Activated CD8-positive, alpha-beta T cell treated with anti-CD3 and anti-CD28 coated beads for 36 hours (primary cell): ENCODE measurements at regions of chr11 and their contacts with region 1.

Region 1: DNA sequence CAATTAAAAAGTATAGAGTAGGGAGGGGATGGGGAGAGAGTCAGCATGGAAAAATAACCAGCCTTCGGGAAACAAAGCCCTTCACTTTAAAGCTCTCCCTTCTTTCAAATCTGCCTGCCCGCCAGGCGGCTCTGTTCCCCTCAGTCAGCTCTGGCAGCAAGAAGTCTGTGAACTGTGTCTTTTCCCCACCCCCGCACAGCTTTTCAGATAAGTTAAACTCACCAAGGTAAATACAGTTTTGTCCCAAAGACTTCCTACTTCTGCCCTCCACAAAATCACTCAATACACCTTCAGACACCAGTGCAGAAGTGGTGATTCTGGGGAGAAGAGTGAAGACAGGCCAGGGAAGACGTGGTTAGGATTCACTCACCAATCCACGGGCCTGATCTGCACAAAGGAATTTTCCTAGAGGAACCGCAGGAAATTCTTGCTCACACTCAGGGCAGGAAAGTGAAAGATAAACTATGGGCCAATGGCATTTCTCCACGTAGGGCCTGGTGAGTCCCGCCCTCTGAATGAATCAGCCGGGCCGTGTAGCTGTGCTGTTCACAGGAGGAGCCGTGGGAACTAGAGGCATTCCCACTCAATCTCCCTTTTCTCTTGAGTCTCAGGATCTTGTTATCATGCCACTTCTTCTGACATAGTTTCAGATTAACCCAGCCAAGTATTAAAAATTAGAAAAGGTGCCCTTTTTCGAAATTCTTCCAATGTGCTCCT is at the start of gene TRIM5:
- DNase-seq: peak; percentile 94
- ATAC-seq: peak; percentile 84
- H3K4me3 Mint-ChIP-seq: peak within 1 kb of the TSS; percentile 95
- H3K27ac Mint-ChIP-seq: peak within 1 kb of the TSS; percentile 98
- H3K4me1 Mint-ChIP-seq: peaks cover 49% of the 10 kb centered on the region
- H3K27me3 Mint-ChIP-seq: no peaks in the 10 kb centered on the region
- CTCF ChIP-seq: peak; percentile 75
- total RNA-seq, gene TRIM5: 21.5 TPM

Region 2: DNA sequence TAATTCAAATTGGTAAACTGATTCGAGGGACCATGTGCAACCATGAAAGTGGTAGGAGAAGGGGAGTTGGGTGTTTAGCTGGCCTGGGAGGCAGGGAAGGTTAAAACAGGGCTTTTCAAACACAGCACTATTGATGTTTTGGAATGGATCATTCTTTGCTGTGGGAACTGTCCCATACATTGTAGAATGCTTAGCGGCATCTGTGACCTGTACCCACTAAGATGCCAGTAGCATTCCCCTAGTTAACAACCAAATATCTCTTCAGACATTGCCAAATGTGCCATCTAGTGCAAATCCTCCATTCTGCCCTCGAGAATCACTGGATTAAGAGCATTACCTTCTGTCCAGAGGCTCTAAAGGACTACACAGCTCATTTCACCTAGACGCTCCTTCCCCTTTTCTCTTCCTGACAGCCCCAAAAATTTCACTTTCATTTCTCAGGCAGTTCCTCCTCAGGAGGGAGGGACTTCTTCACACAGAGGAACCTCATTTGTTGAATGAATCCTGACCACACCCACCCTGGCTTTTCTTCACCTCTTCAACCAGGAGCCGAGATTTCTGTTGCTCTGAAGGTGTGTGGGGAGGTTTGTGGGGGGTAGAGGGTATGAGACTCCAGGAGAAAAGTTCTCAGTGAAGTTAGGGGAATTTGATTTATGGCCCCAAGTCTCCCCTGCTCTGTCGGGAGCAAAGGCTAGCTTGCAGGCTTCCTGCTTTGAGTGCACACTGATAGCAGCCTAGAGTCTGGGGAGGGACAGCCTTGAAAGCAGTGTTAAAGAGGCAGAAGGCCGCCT is 60.1 kb before region 1 on chr11 and contains the start of gene TRIM34:
- CTCF ChIA-PET with region 1: interaction called, 5 read pairs
- POLR2A ChIA-PET with region 1: interaction called, 9 read pairs
- intact Hi-C with region 1: loop called (anchors 2 kb)
- DNase-seq: peak; percentile 73
- ATAC-seq: peak; percentile 97
- H3K4me3 Mint-ChIP-seq: peak within 1 kb of the TSS; percentile 93
- H3K27ac Mint-ChIP-seq: peak within 1 kb of the TSS; percentile 95
- H3K4me1 Mint-ChIP-seq: peaks cover 45% of the 10 kb centered on the region
- H3K27me3 Mint-ChIP-seq: no peaks in the 10 kb centered on the region
- CTCF ChIP-seq: no peak
- total RNA-seq, gene TRIM34: 8.5 to 9.3 TPM

Region 3: DNA sequence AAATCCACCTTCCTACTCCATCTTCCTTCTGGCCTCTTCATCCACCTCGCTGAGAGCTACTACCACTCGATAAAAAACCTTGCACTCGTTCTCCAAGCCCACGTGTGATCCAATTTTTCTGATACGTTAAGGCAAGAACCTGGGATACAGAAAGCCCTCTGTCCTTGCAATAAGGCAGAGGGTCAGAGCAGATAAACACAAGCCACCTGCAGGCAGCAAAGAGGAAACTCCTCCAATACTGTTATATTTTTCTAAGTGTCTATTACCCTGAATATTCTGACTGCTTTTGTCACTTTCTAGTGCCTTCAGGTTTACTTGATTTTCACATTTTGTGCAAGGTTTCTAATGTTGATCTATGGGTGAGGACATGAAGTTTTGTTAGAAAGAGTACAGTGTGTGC is 26.5 kb before region 1 on chr11:
- CTCF ChIA-PET with region 1: no interaction called
- POLR2A ChIA-PET with region 1: no interaction called
- intact Hi-C with region 1: no loop called
- DNase-seq: no peak
- ATAC-seq: no peak
- H3K4me3 Mint-ChIP-seq: no peak overlapping the region
- H3K27ac Mint-ChIP-seq: no peak overlapping the region
- H3K4me1 Mint-ChIP-seq: no peaks in the 10 kb centered on the region
- H3K27me3 Mint-ChIP-seq: no peaks in the 10 kb centered on the region
- CTCF ChIP-seq: no peak

Region 4: DNA sequence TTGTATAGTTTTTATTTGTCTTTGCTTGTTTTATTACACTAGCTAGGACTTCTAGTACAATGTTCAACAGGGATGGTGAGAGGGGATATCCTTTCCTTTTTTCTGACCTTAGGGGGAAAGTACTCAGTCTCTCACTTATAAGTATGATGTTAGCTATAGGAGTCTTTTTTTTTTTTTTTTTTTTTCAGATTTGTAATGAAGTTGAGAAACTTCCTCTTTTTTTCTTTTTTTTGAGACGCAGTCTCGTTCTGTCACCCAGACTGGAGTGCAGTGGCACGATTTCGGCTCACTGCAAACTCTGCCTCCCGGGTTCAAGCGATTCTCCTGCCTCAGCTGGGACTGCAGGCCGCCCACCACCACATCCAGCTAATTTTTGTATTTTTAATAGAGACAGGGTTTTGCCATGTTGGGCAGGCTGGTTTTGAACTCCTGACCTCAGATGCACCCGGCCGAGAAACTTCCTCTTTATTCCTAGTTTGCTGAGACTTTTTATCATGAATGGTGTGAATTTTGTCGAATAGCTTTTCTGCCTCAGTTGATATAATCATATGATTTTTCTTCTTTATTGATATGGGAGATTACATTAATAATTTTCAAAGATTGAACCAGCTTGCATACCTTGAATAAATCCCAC is 15.7 kb after region 1 on chr11:
- CTCF ChIA-PET with region 1: interaction called, 7 read pairs
- POLR2A ChIA-PET with region 1: interaction called, 10 read pairs
- intact Hi-C with region 1: loop called (anchors 2 kb)
- DNase-seq: no peak
- ATAC-seq: no peak
- H3K4me3 Mint-ChIP-seq: no peak overlapping the region
- H3K27ac Mint-ChIP-seq: peak overlapping the region; percentile 53
- H3K4me1 Mint-ChIP-seq: peaks cover 74% of the 10 kb centered on the region
- H3K27me3 Mint-ChIP-seq: no peaks in the 10 kb centered on the region
- CTCF ChIP-seq: no peak